ENCODE measurements at regions of chr3 and their contacts with region 1.

Region 1: DNA sequence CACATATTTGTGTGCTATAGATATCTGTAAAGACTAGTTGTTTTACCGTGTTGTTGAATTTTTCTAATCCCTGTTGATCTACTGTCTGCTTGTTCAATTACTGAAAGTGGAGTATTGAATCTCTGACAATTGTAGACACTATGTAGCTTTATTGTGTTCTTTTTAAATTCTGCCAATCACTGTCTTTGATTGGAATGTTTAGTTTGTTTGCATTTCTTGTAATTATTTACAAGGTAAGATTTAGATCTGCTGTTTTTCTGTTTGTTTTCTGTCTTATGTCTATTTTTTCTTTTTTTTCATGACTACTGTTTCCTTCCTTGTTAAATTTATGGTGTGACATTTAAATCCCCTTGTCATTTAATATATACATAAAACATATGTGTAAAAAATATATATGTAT is 702.4 kb upstream of the EPHA6 start:
- DNase-seq: no peak
- ATAC-seq: no peak
- H3K4me3 ChIP-seq: no peak overlapping the region
- H3K27ac ChIP-seq: no peak overlapping the region
- H3K4me1 ChIP-seq: no peaks in the 10 kb centered on the region
- H3K27me3 ChIP-seq: no peaks in the 10 kb centered on the region
- CTCF ChIP-seq: no peak

Region 2: DNA sequence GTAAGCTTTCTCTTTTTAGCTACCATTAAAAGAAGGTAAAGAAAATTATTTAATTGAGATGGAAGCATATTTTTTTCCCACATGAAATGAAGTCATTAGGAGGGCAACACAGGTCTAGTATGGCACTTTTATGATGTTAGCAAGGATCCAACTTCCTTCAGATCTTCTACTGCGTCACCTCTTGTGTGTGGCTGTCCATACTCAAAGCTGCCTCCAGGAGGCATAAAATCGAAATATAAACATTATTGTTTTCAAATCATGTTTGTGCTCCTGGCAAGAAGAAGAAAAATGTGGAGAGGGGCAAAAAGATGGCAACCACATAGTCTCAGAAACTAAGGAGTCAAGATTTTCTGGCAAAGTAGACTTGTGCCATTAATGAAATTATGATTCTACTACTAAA is 89.3 kb before region 1 on chr3:
- intact Hi-C with region 1: no loop called
- DNase-seq: no peak
- ATAC-seq: no peak
- H3K4me3 ChIP-seq: no peak overlapping the region
- H3K27ac ChIP-seq: no peak overlapping the region
- H3K4me1 ChIP-seq: no peaks in the 10 kb centered on the region
- H3K27me3 ChIP-seq: no peaks in the 10 kb centered on the region
- CTCF ChIP-seq: no peak

Region 3: GRCh38 chr3:96059301-96059700 is 52.6 kb before region 1 on chr3:
- intact Hi-C with region 1: loop called in 1 of 10 experiments (anchors 10 kb)
- DNase-seq: no peak
- ATAC-seq: no peak
- H3K4me3 ChIP-seq: no peak overlapping the region
- H3K27ac ChIP-seq: no peak overlapping the region
- H3K4me1 ChIP-seq: no peaks in the 10 kb centered on the region
- H3K27me3 ChIP-seq: no peaks in the 10 kb centered on the region
- CTCF ChIP-seq: no peak